CD4-positive, alpha-beta T cell (primary cell): ENCODE measurements at regions of chr10 and their contacts with region 1.

Region 1: DNA sequence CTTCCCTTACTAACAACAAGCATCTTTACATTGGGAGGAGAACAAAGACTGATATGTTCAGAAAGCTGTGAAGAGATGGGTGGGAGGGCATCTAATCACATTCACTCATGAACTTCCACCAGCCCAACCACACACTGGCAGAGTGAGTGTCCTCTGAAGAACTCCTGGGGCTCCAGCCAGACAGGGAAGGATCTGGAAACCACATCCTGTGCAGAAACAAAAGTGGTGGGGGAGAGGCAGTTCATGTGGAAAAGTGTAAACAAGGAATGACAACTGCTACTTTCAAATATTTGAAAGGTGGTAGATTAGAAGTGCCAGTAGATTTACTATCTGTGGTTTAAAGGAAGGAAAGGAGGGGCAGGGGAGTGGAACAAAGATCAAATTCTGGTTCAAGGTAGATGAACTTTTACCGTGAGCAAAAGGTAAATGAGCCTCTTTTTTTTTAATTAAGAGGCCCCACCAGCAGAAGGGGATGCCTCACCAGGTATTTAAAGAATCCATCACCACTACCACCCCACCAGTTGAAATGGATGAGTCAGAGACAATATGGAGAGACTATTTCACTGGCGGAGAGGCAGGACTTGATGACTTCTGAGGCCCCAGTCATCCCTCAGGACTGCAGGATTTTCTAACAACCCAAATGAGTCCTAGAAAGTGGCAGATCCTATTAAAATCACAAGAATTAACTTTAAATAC is 34.5 kb downstream of the GOT1 start:
- DNase-seq: no peak
- ATAC-seq: no peak
- H3K4me3 ChIP-seq: no peak overlapping the region
- H3K4me3 Mint-ChIP-seq: no peak overlapping the region
- H3K27ac ChIP-seq: no peak overlapping the region
- H3K27ac Mint-ChIP-seq: no peak overlapping the region
- H3K4me1 ChIP-seq: peaks cover 4% of the 10 kb centered on the region
- H3K4me1 Mint-ChIP-seq: peaks cover 6% of the 10 kb centered on the region
- H3K27me3 ChIP-seq: no peaks in the 10 kb centered on the region
- H3K27me3 Mint-ChIP-seq: no peaks in the 10 kb centered on the region
- CTCF ChIP-seq: no peak

Region 2: GRCh38 chr10:99341860-99342490 is 53.9 kb before region 1 on chr10:
- CTCF ChIA-PET with region 1: no interaction called
- POLR2A ChIA-PET with region 1: no interaction called
- intact Hi-C with region 1: no loop called
- DNase-seq: no peak
- ATAC-seq: no peak
- H3K4me3 ChIP-seq: no peak overlapping the region
- H3K4me3 Mint-ChIP-seq: no peak overlapping the region
- H3K27ac ChIP-seq: no peak overlapping the region
- H3K27ac Mint-ChIP-seq: no peak overlapping the region
- H3K4me1 ChIP-seq: no peaks in the 10 kb centered on the region
- H3K4me1 Mint-ChIP-seq: no peaks in the 10 kb centered on the region
- H3K27me3 ChIP-seq: peaks cover 0 to 4% of the 10 kb centered on the region in 2 experiments
- H3K27me3 Mint-ChIP-seq: peaks cover 24% of the 10 kb centered on the region
- CTCF ChIP-seq: no peak

Region 3: GRCh38 chr10:99370993-99371392 is 24.9 kb before region 1 on chr10:
- CTCF ChIA-PET with region 1: no interaction called
- POLR2A ChIA-PET with region 1: no interaction called
- intact Hi-C with region 1: no loop called
- DNase-seq: peak in 2 of 14 experiments; percentile 0 to 5
- ATAC-seq: no peak
- H3K4me3 ChIP-seq: no peak overlapping the region
- H3K4me3 Mint-ChIP-seq: no peak overlapping the region
- H3K27ac ChIP-seq: no peak overlapping the region
- H3K27ac Mint-ChIP-seq: no peak overlapping the region
- H3K4me1 ChIP-seq: no peaks in the 10 kb centered on the region
- H3K4me1 Mint-ChIP-seq: peaks cover 6% of the 10 kb centered on the region
- H3K27me3 ChIP-seq: peaks cover 7 to 11% of the 10 kb centered on the region in 2 experiments
- H3K27me3 Mint-ChIP-seq: peaks cover 30% of the 10 kb centered on the region
- CTCF ChIP-seq: no peak

Region 4: GRCh38 chr10:99612167-99612831 is 216.4 kb after region 1 on chr10:
- CTCF ChIA-PET with region 1: interaction called, 4 read pairs
- POLR2A ChIA-PET with region 1: no interaction called
- intact Hi-C with region 1: loop called (anchors 1 kb)
- DNase-seq: peak in 4 of 14 experiments; percentile 38 to 75 (median 70)
- ATAC-seq: peak; percentile 71
- H3K4me3 ChIP-seq: no peak overlapping the region
- H3K4me3 Mint-ChIP-seq: peak overlapping the region; percentile 58
- H3K27ac ChIP-seq: peak overlapping the region in 1 of 2 donors; percentile 7
- H3K27ac Mint-ChIP-seq: peak overlapping the region; percentile 48
- H3K4me1 ChIP-seq: peaks cover 7% of the 10 kb centered on the region
- H3K4me1 Mint-ChIP-seq: peaks cover 36% of the 10 kb centered on the region
- H3K27me3 ChIP-seq: no peaks in the 10 kb centered on the region
- H3K27me3 Mint-ChIP-seq: no peaks in the 10 kb centered on the region
- CTCF ChIP-seq: peak; percentile 90

Region 5: GRCh38 chr10:99711129-99711719 is 315.3 kb after region 1 on chr10:
- CTCF ChIA-PET with region 1: interaction called, 3 read pairs
- POLR2A ChIA-PET with region 1: no interaction called
- intact Hi-C with region 1: loop called in 1 of 2 experiments (anchors 2 kb)
- DNase-seq: peak in 4 of 14 experiments; percentile 40 to 67 (median 55)
- ATAC-seq: peak; percentile 69
- H3K4me3 ChIP-seq: no peak overlapping the region
- H3K4me3 Mint-ChIP-seq: no peak overlapping the region
- H3K27ac ChIP-seq: no peak overlapping the region
- H3K27ac Mint-ChIP-seq: no peak overlapping the region
- H3K4me1 ChIP-seq: no peaks in the 10 kb centered on the region
- H3K4me1 Mint-ChIP-seq: no peaks in the 10 kb centered on the region
- H3K27me3 ChIP-seq: no peaks in the 10 kb centered on the region
- H3K27me3 Mint-ChIP-seq: no peaks in the 10 kb centered on the region
- CTCF ChIP-seq: peak; percentile 59

Region 6: GRCh38 chr10:99906470-99906869 is 510.6 kb after region 1 on chr10:
- CTCF ChIA-PET with region 1: no interaction called
- POLR2A ChIA-PET with region 1: no interaction called
- intact Hi-C with region 1: no loop called
- DNase-seq: no peak
- ATAC-seq: no peak
- H3K4me3 ChIP-seq: no peak overlapping the region
- H3K4me3 Mint-ChIP-seq: no peak overlapping the region
- H3K27ac ChIP-seq: no peak overlapping the region
- H3K27ac Mint-ChIP-seq: no peak overlapping the region
- H3K4me1 ChIP-seq: no peaks in the 10 kb centered on the region
- H3K4me1 Mint-ChIP-seq: no peaks in the 10 kb centered on the region
- H3K27me3 ChIP-seq: no peaks in the 10 kb centered on the region
- H3K27me3 Mint-ChIP-seq: no peaks in the 10 kb centered on the region
- CTCF ChIP-seq: no peak